HEK293 (cell line): ENCODE measurements at regions of chr9 and their contacts with region 1.

Region 1: DNA sequence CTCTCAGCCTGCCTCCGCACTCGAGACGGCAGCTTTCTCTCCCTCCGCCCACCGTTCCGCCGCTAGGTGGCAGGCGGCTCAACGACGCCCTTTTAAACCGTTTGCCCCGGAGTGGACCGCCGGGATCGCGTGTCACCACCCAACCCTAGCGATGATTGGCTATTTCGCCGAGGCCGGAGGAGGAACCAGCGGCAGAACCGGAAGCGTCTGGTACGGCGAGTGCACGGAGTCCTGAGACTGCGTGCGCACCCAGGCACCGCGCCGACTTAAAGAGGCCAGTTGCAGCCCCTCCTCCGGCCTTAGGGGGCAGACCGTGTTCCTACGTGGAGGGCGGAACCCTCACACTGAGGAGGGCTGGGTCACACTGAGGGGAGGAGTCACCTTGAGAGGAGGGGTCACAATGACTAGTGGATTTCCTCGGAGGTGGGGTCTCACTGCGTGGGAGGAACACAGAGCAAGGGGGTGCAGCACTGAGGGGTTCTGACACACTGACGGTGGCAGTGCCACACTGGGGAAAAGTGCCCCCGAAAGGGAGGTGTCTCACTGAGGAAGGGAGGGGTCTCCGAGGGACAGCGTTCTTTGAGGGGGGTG is 980 bp upstream of the TESK1 start:
- H3K4me3 ChIP-seq: peak overlapping the region; percentile 54
- H3K27ac ChIP-seq: peak overlapping the region; percentile 43
- H3K4me1 ChIP-seq: no peaks in the 10 kb centered on the region
- CTCF ChIP-seq: peak; percentile 96

Region 2: DNA sequence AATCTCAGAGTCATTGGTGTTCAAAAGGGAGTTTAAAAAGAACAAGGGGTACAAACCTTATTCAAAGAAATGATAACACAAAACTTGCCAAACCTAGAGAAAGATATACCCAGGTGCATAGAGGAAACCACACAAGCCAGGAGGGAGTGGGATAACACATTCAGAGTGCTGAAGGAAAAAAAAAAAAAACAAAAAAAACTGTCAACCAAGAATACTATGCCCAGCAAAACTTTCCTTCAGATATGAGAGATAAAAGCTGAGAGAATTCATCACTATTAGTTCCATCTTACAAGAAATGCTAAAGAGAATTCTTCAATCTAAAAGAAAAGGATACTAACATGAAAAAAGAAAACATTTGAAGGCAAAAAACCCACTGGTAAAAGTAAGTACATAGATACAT is 10.5 kb before region 1 on chr9:
- CTCF ChIA-PET with region 1: interaction called, 10 read pairs
- POLR2A ChIA-PET with region 1: no interaction called
- H3K4me3 ChIP-seq: no peak overlapping the region
- H3K27ac ChIP-seq: no peak overlapping the region
- H3K4me1 ChIP-seq: no peaks in the 10 kb centered on the region
- CTCF ChIP-seq: no peak

Region 3: GRCh38 chr9:35763803-35764202 is 159.7 kb after region 1 on chr9:
- CTCF ChIA-PET with region 1: no interaction called
- POLR2A ChIA-PET with region 1: no interaction called
- H3K4me3 ChIP-seq: no peak overlapping the region
- H3K27ac ChIP-seq: no peak overlapping the region
- H3K4me1 ChIP-seq: peaks cover 9% of the 10 kb centered on the region
- CTCF ChIP-seq: no peak